Heart right ventricle (tissue), 16 donors: ENCODE measurements at regions of chr15 and their contacts with region 1.

Region 1: DNA sequence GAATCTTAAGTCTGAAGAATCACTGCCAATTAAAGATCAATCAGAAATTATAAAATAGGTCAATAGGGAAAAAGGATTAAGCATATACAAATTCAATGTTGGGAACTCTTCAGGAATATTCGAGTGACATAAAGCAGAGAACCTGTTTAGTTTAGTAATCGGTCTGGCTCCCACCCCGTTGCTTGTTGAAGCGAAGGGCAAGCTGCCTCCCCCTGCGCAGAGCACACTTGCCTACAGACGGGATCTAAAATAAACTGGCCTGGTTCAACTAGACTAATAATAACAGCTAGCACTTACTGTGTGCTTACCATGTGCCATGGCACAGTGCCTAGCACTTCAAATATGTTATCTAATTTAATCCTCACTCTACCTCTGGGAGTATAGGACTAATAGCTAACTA is 8.6 kb downstream of the SEMA6D start:
- DNase-seq: peak; percentile 35 to 72
- ATAC-seq: peak; percentile 85 to 97 (median 95)
- H3K4me3 ChIP-seq: no peak overlapping the region
- H3K27ac ChIP-seq: peak overlapping the region; percentile 14 to 88 (median 82)
- H3K4me1 ChIP-seq: peaks cover 5 to 89% (median 59%) of the 10 kb centered on the region in 9 donors
- H3K27me3 ChIP-seq: no peaks in the 10 kb centered on the region
- CTCF ChIP-seq: no peak

Region 2: DNA sequence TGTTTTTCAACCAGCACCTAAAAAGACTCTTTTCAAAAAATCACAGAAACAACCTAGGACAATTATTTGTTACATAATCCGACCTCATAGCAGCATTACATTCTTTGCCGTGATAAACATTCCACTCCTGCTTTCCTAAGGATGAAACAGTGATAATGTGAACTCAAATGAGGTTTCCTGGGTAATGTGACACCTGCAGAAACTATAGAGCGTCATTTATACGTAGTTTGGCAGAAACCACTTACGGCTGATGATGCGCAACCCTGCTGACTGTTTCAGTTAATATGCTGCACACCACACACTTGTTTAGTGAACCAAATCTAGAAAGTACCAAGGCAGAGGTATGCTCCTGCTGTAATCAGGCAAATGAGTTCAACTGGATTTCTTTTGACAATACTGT is 47.3 kb after region 1 on chr15:
- intact Hi-C with region 1: loop called in 1 of 10 experiments (anchors 2 kb)
- DNase-seq: no peak
- ATAC-seq: no peak
- H3K4me3 ChIP-seq: no peak overlapping the region
- H3K27ac ChIP-seq: no peak overlapping the region
- H3K4me1 ChIP-seq: peaks cover 0 to 7% (median 0%) of the 10 kb centered on the region in 9 donors
- H3K27me3 ChIP-seq: no peaks in the 10 kb centered on the region
- CTCF ChIP-seq: no peak

Region 3: GRCh38 chr15:48352474-48353072 is 626.7 kb after region 1 on chr15:
- intact Hi-C with region 1: no loop called
- DNase-seq: peak in 1 of 2 donors; percentile 29
- ATAC-seq: peak in 7 of 8 donors; percentile 55 to 81 (median 76)
- H3K4me3 ChIP-seq: no peak overlapping the region
- H3K27ac ChIP-seq: no peak overlapping the region
- H3K4me1 ChIP-seq: peaks cover 0 to 9% (median 0%) of the 10 kb centered on the region in 9 donors
- H3K27me3 ChIP-seq: no peaks in the 10 kb centered on the region
- CTCF ChIP-seq: peak; percentile 52 to 89 (median 79)